HepG2 (cell line): ENCODE measurements at regions of chr20 and their contacts with region 1.

Region 1: DNA sequence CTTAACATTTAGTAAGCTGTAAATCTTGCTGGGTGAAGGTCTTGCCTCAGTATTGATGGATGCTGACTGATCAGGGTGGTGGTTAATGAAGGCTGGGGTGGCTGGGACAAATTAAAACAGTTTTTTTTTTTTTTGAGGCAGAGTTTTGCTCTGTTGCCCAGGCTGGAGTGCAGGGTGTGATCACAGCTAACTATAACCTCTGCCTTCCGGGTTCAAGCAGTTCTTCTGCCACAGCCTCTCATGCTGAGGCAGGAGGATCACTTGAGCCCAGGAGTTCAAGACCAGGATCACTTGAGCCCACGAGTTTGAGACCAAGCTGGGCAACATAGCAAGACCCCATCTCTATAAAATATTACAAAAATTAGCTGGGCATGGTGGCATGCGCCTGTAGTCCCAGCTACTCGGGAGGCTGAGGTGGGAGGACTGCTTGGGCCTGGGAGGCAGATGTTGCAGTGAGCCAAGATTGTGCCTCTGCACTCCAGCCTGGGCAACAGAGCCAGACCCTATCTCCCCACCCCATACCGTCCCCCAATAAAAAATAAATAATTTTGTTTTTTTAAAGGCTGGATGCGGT is 67.2 kb downstream of the NCOA3 start:
- DNase-seq: no peak
- ATAC-seq: no peak
- H3K4me3 ChIP-seq: no peak overlapping the region
- H3K27ac ChIP-seq: no peak overlapping the region
- H3K4me1 ChIP-seq: peaks cover 67% of the 10 kb centered on the region
- H3K27me3 ChIP-seq: no peaks in the 10 kb centered on the region
- CTCF ChIP-seq: no peak
- EP300 ChIP-seq: no peak
- POLR2A ChIP-seq: no peak
- RAD21 ChIP-seq: no peak

Region 2: GRCh38 chr20:47533518-47534062 is 35.3 kb before region 1 on chr20:
- CTCF ChIA-PET with region 1: no interaction called
- POLR2A ChIA-PET with region 1: no interaction called
- in situ Hi-C with region 1: no loop called
- intact Hi-C with region 1: loop called (anchors 1 kb)
- DNase-seq: no peak
- ATAC-seq: no peak
- H3K4me3 ChIP-seq: no peak overlapping the region
- H3K27ac ChIP-seq: no peak overlapping the region
- H3K4me1 ChIP-seq: peaks cover 43% of the 10 kb centered on the region
- H3K27me3 ChIP-seq: no peaks in the 10 kb centered on the region
- CTCF ChIP-seq: no peak
- EP300 ChIP-seq: no peak
- POLR2A ChIP-seq: no peak
- RAD21 ChIP-seq: no peak

Region 3: DNA sequence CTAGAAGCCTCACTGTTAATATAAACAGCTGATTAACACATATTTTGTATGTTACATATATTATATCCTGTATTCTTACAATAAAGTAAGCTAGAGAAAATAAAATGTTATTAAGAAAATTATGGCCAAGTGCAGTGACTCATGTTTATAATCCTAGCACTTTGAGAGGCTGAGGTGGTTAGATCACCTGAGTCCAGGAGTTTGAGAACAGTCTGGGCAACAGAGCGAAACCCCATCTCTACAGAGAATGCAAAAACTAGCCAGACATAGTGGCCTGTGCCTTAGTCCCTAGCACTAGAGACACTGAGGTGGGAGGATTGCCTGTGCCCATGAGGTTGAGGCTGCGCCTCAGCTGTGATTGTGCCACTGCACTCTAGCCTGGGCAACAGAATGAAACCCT is 14.6 kb after region 1 on chr20:
- CTCF ChIA-PET with region 1: no interaction called
- POLR2A ChIA-PET with region 1: no interaction called
- in situ Hi-C with region 1: no loop called
- intact Hi-C with region 1: no loop called
- DNase-seq: no peak
- ATAC-seq: no peak; the same call in 2 of the 3 replicates
- H3K4me3 ChIP-seq: no peak overlapping the region
- H3K27ac ChIP-seq: no peak overlapping the region
- H3K4me1 ChIP-seq: peaks cover 39% of the 10 kb centered on the region
- H3K27me3 ChIP-seq: no peaks in the 10 kb centered on the region
- CTCF ChIP-seq: no peak
- EP300 ChIP-seq: no peak
- POLR2A ChIP-seq: no peak
- RAD21 ChIP-seq: no peak

Region 4: GRCh38 chr20:47847868-47848531 is 279.1 kb after region 1 on chr20:
- CTCF ChIA-PET with region 1: no interaction called
- POLR2A ChIA-PET with region 1: no interaction called
- in situ Hi-C with region 1: no loop called
- intact Hi-C with region 1: no loop called
- DNase-seq: no peak
- ATAC-seq: no peak
- H3K4me3 ChIP-seq: no peak overlapping the region
- H3K27ac ChIP-seq: no peak overlapping the region
- H3K4me1 ChIP-seq: no peaks in the 10 kb centered on the region
- H3K27me3 ChIP-seq: peaks cover 8 to 45% of the 10 kb centered on the region in 2 experiments; a peak in 4 of 5 replicates
- CTCF ChIP-seq: no peak
- EP300 ChIP-seq: no peak
- POLR2A ChIP-seq: no peak
- RAD21 ChIP-seq: no peak